Right ventricle myocardium inferior (tissue), 1 donor: ENCODE measurements at regions of chr20 and their contacts with region 1.

Region 1: DNA sequence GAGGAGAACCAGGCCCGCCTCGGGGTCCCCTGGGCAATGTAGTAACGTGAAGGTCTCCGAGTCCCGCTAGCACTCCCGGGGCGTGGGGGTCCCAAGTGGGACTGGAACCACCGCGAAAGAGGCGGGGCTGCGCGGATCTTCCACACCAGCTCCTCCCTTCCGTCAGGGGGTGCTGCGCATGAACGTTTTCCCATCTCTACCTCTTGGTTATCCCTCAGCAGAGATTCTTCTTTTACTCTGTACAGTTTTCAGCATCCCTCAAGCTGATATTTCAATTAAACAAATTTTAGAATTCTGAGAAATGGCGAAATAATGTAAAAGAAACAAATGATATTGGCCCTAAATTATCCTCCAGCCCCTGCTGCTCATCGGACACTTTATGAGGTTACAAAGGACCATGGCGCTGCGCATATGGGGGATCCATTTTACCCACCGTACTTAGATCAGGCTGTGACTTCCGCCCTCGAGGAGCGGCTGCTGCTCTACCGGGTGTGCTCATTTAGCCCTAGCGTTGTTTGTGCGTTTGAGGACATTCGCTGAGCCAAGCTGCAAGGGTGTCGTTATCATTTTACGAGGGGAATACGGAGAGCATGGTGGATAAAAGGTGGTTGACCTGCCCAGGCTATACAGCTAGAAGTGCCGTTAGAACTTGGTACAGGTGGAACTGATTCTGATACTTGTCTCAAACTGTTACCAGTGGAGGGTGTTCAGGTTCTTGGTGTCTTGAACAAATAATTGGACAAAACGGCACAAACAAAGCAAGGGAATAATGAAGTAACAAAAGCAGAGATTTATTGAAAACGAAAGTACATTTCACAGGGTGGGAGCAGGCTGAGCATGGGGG is 75.2 kb upstream of the CHD6 start:
- DNase-seq: peak; percentile 87
- ATAC-seq: peak; percentile 96

Region 2: DNA sequence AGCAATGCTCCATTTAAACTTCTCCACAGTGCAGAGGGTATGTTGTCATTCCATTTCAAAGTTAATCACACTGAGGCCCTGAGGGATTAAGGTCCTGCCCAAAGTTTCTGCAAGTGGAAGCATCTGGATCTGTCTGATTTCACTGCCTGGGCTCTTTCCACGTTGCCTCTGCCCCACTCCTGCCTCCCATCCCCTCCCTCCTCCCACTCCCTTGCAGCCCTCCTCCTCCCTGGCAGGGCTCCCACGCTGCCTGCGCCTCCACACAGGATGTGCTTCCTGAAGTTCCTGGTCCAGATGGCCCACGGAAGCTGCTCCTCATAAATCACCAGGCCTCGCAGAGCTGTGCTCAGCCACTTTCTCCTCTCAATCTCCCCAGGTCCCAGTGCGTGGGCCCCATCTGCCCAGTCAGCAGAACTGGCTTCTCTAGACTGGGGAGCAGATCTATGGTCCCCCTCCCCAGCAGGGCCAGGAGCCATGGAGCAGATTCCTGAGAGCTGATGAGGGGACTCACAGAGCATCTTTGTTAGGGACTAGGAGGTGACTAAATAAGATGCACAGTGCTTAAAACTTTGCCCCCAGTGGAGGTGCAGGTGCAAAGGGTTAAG is 938.9 kb before region 1 on chr20:
- intact Hi-C with region 1: loop called (anchors 10 kb)
- DNase-seq: peak; percentile 70
- ATAC-seq: peak; percentile 65

Region 3: GRCh38 chr20:41467220-41467619 is 226.1 kb before region 1 on chr20:
- intact Hi-C with region 1: loop called (anchors 5 kb)
- DNase-seq: no peak
- ATAC-seq: no peak

Region 4: DNA sequence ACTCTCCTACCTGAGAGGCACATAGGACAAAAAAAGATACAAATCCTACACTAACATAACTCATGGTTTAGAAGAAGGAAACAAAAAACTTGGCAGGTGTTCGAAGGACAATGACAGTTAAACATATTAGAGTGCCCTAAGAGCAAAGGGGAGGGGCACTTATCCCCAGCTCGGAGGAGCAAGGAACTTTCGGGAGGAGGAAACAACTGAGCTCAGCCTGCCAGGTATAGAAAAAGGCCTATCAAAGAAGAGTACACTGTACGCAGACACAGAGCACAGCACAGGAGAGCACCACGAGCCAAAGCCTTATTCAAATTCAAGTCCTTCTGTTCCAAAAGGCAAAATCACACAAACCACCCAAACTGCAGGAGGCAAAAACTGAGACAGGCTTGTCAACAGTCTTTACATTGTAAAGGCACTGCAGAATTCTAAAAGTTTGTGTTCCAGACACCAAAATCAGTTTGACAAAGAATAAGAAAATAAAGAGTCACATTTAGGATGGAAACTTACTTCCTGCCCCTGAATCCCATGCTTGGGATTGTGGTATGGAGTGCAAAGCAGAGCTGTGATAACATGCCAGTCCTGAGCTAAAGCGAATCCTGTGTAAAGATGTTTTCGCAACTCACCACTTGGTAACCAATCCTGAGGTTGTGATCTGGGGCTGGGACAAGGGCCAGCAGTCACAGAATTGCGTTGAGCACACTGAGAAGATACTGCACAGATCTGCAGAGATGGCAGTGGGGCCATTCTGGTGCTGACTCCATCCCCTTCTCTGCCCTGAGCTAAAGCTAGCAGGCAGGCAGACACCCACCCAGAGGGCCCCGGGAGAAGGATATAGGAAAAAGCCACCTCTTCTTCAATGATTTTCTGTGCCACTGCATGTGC is 183.8 kb before region 1 on chr20:
- intact Hi-C with region 1: loop called (anchors 5 kb)
- DNase-seq: peak; percentile 55
- ATAC-seq: peak; percentile 84

Region 5: GRCh38 chr20:41617931-41618806 is 75.2 kb before region 1 on chr20 and contains the start of gene CHD6:
- intact Hi-C with region 1: loop called (anchors 2 kb)
- DNase-seq: peak; percentile 99
- ATAC-seq: peak; percentile 99
- total RNA-seq, gene CHD6: 33.0 TPM

Region 6: GRCh38 chr20:41798930-41799502 is 105.7 kb after region 1 on chr20:
- intact Hi-C with region 1: no loop called
- DNase-seq: no peak
- ATAC-seq: no peak

Region 7: GRCh38 chr20:42041072-42041471 is 347.7 kb after region 1 on chr20:
- intact Hi-C with region 1: no loop called
- DNase-seq: no peak
- ATAC-seq: no peak